ENCODE measurements at regions of chrX and their contacts with region 1.

Region 1: DNA sequence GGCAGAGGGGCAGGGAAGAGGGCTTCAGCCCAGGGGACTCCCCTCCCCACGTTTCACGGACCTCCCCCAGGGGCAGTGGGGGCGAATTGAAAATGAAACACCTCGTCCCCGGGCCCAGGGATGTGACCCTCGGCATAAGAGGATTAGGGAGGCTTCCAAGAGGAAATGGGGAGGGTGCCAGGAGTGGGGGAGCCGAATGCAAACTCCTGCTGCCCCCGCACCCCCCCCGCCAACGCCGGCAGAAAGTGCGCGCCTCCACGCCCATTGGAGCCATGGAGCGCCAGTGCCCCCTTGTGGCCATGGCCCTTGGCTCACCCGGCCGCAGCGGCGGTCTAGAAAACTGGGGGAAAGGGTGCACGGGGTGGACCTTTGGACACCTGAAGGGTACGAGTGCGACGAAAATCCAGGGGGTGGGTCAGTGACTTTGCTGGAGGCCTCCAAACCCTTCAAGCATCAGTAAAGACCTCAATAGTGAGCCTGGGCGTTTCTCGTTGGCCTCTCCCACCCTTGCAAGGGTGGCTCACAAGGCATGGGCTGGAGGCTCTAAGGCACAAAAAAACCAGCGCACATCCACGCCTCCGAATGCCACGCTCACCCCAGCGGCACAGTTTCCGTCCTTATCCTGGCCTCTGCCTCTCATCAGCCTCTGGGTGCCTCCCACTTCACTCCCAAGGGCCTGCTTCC is 120.8 kb upstream of the PJA1 start:
- DNase-seq: peak; percentile 81 to 89 (median 88)
- H3K4me3 ChIP-seq: peak overlapping the region; percentile 38
- H3K27ac ChIP-seq: peak overlapping the region; percentile 62 to 72
- H3K4me1 ChIP-seq: peaks cover 2% of the 10 kb centered on the region
- H3K27me3 ChIP-seq: no peaks in the 10 kb centered on the region
- CTCF ChIP-seq: peak; percentile 72 to 88 (median 85)
- EP300 ChIP-seq: no peak
- POLR2A ChIP-seq: no peak

Region 2: GRCh38 chrX:69222103-69223090 is 63.6 kb before region 1 on chrX:
- intact Hi-C with region 1: loop called in 2 of 4 experiments (anchors 5 to 10 kb)
- DNase-seq: peak; percentile 65 to 82 (median 80)
- H3K4me3 ChIP-seq: no peak overlapping the region
- H3K27ac ChIP-seq: no peak overlapping the region
- H3K4me1 ChIP-seq: no peaks in the 10 kb centered on the region
- H3K27me3 ChIP-seq: no peaks in the 10 kb centered on the region
- CTCF ChIP-seq: peak; percentile 34 to 67 (median 54)
- EP300 ChIP-seq: no peak
- POLR2A ChIP-seq: no peak

Region 3: GRCh38 chrX:69229436-69229835 is 56.6 kb before region 1 on chrX:
- intact Hi-C with region 1: loop called in 2 of 4 experiments (anchors 5 to 10 kb)
- DNase-seq: no peak
- H3K4me3 ChIP-seq: no peak overlapping the region
- H3K27ac ChIP-seq: no peak overlapping the region
- H3K4me1 ChIP-seq: no peaks in the 10 kb centered on the region
- H3K27me3 ChIP-seq: no peaks in the 10 kb centered on the region
- CTCF ChIP-seq: no peak
- EP300 ChIP-seq: no peak
- POLR2A ChIP-seq: no peak

Region 4: GRCh38 chrX:69597399-69597798 is 311.4 kb after region 1 on chrX:
- intact Hi-C with region 1: no loop called
- DNase-seq: no peak
- H3K4me3 ChIP-seq: no peak overlapping the region
- H3K27ac ChIP-seq: no peak overlapping the region
- H3K4me1 ChIP-seq: no peaks in the 10 kb centered on the region
- H3K27me3 ChIP-seq: no peaks in the 10 kb centered on the region
- CTCF ChIP-seq: no peak
- EP300 ChIP-seq: no peak
- POLR2A ChIP-seq: no peak